ENCODE measurements at regions of chr12 and their contacts with region 1.

Region 1: DNA sequence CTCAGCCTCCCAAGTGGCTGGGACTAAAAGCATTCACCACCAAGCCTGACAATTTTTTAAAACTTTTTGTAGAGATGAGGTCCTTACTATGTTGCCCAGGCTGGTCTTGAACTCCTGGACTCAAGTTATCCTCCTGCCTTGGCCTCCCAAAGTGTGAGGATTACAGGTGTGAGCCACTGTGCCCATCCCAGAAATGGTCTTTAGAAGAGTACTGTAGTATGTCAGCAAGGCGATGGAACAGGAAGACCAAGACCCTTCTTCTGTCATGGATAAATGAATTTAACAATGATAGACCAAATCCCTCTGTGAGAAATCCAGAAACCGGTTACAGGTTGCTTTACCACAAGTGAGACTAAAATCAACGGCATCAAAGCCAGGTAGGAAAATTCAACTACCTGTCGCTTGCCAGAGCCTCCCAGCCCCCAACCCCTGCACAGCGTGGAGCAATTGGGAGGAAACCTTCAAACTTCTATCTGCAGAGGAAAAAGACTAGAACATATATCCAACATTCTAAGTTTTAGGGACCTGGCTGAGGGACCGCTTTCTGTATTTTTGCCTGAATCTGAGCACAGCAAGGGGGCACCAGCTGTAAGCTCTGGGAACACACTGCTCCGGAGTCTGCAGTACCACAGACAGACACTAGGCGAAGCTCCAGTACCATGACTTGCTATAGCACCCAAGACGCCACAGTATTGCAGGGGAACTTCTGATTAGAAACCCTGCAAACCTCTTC is 51.3 kb downstream of the CPSF6 start:
- DNase-seq: peak; percentile 89
- H3K4me3 ChIP-seq: no peak overlapping the region
- H3K27ac ChIP-seq: no peak overlapping the region
- H3K4me1 ChIP-seq: no peaks in the 10 kb centered on the region
- H3K27me3 ChIP-seq: no peaks in the 10 kb centered on the region
- CTCF ChIP-seq: peak; percentile 95

Region 2: GRCh38 chr12:69359531-69360347 is 69.0 kb after region 1 on chr12 and contains the start of gene YEATS4:
- intact Hi-C with region 1: loop called (anchors 10 kb)
- DNase-seq: peak; percentile 94
- H3K4me3 ChIP-seq: peak within 1 kb of the TSS; percentile 94
- H3K27ac ChIP-seq: peak within 1 kb of the TSS; percentile 100
- H3K4me1 ChIP-seq: peaks cover 4% of the 10 kb centered on the region
- H3K27me3 ChIP-seq: no peaks in the 10 kb centered on the region
- CTCF ChIP-seq: no peak
- total RNA-seq, gene YEATS4: 16.4 to 18.2 TPM

Region 3: DNA sequence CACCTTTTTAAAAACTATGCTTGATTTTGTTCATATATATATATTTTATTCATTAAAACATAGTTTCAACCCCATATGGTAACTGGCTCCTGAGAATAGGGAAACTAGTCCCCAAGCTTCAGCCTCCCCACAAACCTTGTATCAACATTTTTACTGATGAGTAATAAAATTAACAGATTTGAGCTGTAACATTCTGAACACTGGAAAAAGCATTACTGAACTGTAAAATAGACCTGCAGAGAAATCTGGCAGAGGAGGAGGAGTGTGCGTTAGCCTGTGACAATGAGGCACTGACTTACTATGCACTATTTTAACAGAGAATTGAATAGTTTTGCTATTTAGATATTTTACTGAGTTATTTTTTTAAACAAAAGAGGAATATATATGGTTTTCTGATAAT is 222.6 kb after region 1 on chr12:
- intact Hi-C with region 1: no loop called
- DNase-seq: no peak
- H3K4me3 ChIP-seq: no peak overlapping the region
- H3K27ac ChIP-seq: no peak overlapping the region
- H3K4me1 ChIP-seq: no peaks in the 10 kb centered on the region
- H3K27me3 ChIP-seq: no peaks in the 10 kb centered on the region
- CTCF ChIP-seq: no peak

Region 4: GRCh38 chr12:69553627-69554248 is 263.0 kb after region 1 on chr12:
- intact Hi-C with region 1: no loop called
- DNase-seq: no peak
- H3K4me3 ChIP-seq: no peak overlapping the region
- H3K27ac ChIP-seq: no peak overlapping the region
- H3K4me1 ChIP-seq: no peaks in the 10 kb centered on the region
- H3K27me3 ChIP-seq: no peaks in the 10 kb centered on the region
- CTCF ChIP-seq: no peak

Region 5: DNA sequence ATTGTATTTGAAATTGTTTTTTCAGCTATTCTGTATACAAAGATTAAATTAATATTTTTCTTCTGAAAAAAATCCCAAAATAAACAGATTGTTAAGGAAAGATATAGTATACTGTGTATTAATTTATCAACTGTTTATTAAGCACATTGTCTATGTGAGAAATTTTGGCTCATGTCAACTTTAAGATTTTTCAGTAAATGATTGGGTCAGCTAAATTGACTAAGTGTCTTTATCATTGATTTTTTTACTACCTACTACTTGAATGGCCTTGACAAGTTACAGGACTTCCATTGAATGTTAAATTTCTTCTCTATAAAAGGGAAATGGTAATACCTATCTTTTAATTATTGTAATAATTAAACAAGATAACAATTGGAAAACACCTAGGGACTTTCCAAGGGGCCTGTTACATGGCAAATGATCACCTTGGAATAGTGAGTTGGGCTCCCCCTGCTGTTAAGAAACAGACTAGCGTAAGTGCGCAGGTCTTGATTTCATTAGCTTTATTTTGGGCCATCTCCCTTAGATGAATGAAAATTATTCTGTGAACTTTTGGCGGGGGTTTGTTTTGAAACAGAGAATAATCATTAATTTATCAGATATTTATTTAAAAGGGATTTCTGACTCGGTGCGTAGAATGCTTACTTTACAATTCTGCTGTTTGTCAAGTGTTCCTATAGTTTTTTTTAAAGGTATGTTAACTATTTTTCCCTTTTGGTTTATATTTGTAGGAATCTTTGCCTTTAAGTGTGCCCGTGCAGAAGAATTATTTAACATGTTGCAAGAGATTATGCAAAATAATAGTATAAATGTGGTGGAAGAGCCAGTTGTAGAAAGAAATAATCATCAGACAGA is 280.1 kb after region 1 on chr12:
- intact Hi-C with region 1: loop called (anchors 5 kb)
- DNase-seq: peak; percentile 58
- H3K4me3 ChIP-seq: no peak overlapping the region
- H3K27ac ChIP-seq: no peak overlapping the region
- H3K4me1 ChIP-seq: no peaks in the 10 kb centered on the region
- H3K27me3 ChIP-seq: no peaks in the 10 kb centered on the region
- CTCF ChIP-seq: peak; percentile 82

Region 6: DNA sequence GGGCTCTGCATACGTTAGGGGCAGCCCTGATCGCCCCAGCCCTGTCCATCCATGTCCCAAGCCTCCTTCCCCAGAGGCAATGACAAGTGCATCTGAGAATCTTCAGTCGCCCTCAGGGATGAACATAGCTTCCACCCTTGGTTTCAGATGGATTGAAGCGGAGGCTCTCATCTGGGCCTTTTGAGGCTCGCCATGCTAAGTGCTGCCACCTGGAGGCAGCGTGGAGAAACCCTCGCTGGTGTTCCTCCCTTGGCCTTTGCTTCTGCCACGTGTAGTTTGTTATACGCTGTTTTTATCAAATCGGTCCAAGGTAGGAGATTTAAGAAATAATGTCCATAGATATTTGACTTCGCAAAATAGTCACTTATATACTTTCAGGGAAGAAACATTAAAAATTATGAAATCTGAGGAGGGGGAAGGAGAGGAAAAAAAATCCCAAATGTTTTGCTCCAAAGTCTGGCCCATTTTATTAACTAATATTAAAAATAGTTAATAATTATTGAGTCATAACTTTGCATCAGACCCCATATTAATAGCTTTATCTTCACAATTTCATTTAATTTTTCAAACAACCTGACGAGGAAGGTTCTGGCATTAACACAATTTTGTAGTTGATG is 348.8 kb after region 1 on chr12:
- intact Hi-C with region 1: loop called (anchors 10 kb)
- DNase-seq: peak; percentile 66
- H3K4me3 ChIP-seq: no peak overlapping the region
- H3K27ac ChIP-seq: no peak overlapping the region
- H3K4me1 ChIP-seq: no peaks in the 10 kb centered on the region
- H3K27me3 ChIP-seq: no peaks in the 10 kb centered on the region
- CTCF ChIP-seq: peak; percentile 83

Measured in colonic mucosa (tissue), 4 donors.